ENCODE measurements at regions of chr1 and their contacts with region 1.

Region 1: DNA sequence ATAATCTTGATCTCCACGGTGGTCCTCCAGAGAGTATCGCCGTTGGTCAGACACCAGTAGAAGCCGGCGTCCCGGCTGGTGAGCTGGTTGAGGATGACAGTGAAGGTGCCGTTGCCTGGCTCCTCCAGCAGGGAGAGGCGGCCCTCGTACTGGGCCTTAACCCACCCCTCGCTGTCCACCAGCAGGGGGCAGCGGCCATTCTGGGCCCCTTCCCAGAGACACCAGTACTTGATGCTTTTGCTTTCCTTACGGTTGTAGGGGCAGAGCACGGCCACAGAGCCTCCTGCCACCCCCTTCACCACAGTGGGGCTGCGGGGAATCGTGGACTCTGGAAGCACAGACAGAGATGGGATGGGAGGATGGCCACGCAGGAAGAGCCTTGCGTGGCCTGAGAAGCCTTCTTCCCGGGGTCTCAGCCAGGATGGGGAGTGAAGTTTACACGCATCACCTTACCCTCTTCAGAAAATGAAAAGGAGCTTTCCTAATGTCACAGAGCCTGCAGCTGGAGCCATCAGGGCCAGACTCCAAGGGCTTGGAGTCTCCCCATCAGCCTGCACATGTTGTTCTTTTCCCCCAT is 10.7 kb downstream of the PIGR start:
- DNase-seq: peak; percentile 58 to 83
- H3K4me3 ChIP-seq: no peak overlapping the region
- H3K27ac ChIP-seq: no peak overlapping the region
- H3K4me1 ChIP-seq: no peaks in the 10 kb centered on the region
- H3K27me3 ChIP-seq: no peaks in the 10 kb centered on the region
- CTCF ChIP-seq: peak; percentile 88 to 99 (median 88)
- EP300 ChIP-seq: no peak
- POLR2A ChIP-seq: no peak
- RAD21 ChIP-seq: peak; percentile 50 to 65

Region 2: DNA sequence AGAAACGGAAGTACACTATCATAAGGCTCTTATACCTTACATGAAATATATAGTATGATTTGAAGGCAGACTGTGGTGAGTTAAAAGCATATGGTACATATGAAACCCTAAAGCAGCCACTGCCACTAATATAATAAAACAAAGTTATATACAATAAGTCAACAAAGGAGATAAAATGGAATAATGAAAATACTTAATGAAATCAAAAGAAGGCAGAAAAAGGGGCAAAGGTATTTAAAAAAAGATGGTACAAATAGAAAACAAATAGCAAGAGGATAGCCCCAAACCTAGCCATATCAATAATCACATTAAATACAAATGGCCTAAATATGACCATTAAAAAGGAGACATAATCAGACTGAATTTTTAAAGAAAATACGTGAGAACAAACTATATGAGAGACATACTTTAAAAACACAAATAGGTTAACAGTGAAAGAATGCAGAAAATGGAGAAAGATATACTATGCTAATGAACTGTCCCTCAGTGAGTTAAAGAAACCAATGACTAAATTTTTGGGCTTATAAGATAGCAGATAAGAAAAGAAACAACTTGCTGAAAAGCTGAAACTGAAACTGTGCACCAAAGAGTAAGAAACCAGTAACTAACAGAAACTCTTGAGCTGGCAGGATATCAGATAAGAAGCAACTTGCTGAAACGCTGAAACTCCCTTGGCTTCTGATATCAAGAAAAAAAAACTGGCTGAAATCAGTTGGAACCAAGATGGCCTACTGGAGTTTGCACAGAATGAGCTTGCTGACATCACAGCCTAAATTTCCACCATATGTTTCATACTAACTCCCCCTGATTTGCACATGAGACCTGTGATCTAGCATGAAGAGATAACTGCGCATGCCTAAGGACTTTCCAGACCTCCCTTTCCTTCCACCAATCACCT is 118.9 kb before region 1 on chr1:
- CTCF ChIA-PET with region 1: interaction called, 11 read pairs
- POLR2A ChIA-PET with region 1: no interaction called
- DNase-seq: no peak
- H3K4me3 ChIP-seq: no peak overlapping the region
- H3K27ac ChIP-seq: no peak overlapping the region
- H3K4me1 ChIP-seq: peaks cover 0 to 7% (median under 1%) of the 10 kb centered on the region in 4 experiments; a peak in 1 of 7 replicates
- H3K27me3 ChIP-seq: no peaks in the 10 kb centered on the region
- CTCF ChIP-seq: no peak
- EP300 ChIP-seq: no peak
- POLR2A ChIP-seq: no peak
- RAD21 ChIP-seq: no peak

Region 3: GRCh38 chr1:206925106-206925736 is 10.4 kb before region 1 on chr1:
- CTCF ChIA-PET with region 1: interaction called, 226 read pairs
- POLR2A ChIA-PET with region 1: no interaction called
- DNase-seq: no peak
- H3K4me3 ChIP-seq: no peak overlapping the region
- H3K27ac ChIP-seq: no peak overlapping the region
- H3K4me1 ChIP-seq: no peaks in the 10 kb centered on the region
- H3K27me3 ChIP-seq: peaks cover 0 to 2% (median 0%) of the 10 kb centered on the region in 4 experiments; a peak in 1 of 7 replicates
- CTCF ChIP-seq: peak; percentile 24 to 39 (median 37); a peak in 2 of 4 replicates
- EP300 ChIP-seq: no peak
- POLR2A ChIP-seq: no peak
- RAD21 ChIP-seq: peak in 1 of 2 experiments; percentile 35; a peak in 1 of 4 replicates

Region 4: GRCh38 chr1:206955476-206956451 is 20.2 kb after region 1 on chr1:
- CTCF ChIA-PET with region 1: interaction called, 226 read pairs
- POLR2A ChIA-PET with region 1: no interaction called
- DNase-seq: no peak
- H3K4me3 ChIP-seq: no peak overlapping the region
- H3K27ac ChIP-seq: no peak overlapping the region
- H3K4me1 ChIP-seq: no peaks in the 10 kb centered on the region
- H3K27me3 ChIP-seq: peaks cover 0 to 3% (median 0%) of the 10 kb centered on the region in 4 experiments; a peak in 1 of 7 replicates
- CTCF ChIP-seq: no peak
- EP300 ChIP-seq: no peak
- POLR2A ChIP-seq: no peak
- RAD21 ChIP-seq: no peak

Region 5: GRCh38 chr1:206971029-206971655 is 35.6 kb after region 1 on chr1:
- CTCF ChIA-PET with region 1: interaction called, 188 read pairs
- POLR2A ChIA-PET with region 1: no interaction called
- DNase-seq: no peak
- H3K4me3 ChIP-seq: no peak overlapping the region
- H3K27ac ChIP-seq: no peak overlapping the region
- H3K4me1 ChIP-seq: no peaks in the 10 kb centered on the region
- H3K27me3 ChIP-seq: no peaks in the 10 kb centered on the region
- CTCF ChIP-seq: no peak
- EP300 ChIP-seq: no peak
- POLR2A ChIP-seq: no peak
- RAD21 ChIP-seq: no peak

Region 6: GRCh38 chr1:207025144-207025880 is 89.7 kb after region 1 on chr1:
- CTCF ChIA-PET with region 1: interaction called, 15 read pairs
- POLR2A ChIA-PET with region 1: no interaction called
- DNase-seq: peak in 1 of 2 experiments; percentile 55
- H3K4me3 ChIP-seq: peak overlapping the region in 2 of 4 experiments; percentile 17 to 26; a peak in 3 of 8 replicates
- H3K27ac ChIP-seq: no peak overlapping the region
- H3K4me1 ChIP-seq: peaks cover 3 to 11% (median 9%) of the 10 kb centered on the region in 4 experiments; a peak in 6 of 7 replicates
- H3K27me3 ChIP-seq: no peaks in the 10 kb centered on the region
- CTCF ChIP-seq: no peak
- EP300 ChIP-seq: no peak
- POLR2A ChIP-seq: no peak
- RAD21 ChIP-seq: no peak

Measured in H1 (cell line).